ENCODE measurements at regions of chr1 and their contacts with region 1.

Region 1: GRCh38 chr1:245493029-245493428 is 338.2 kb downstream of the KIF26B start:
- DNase-seq: no peak
- ATAC-seq: no peak
- H3K4me3 ChIP-seq: no peak overlapping the region
- H3K27ac ChIP-seq: no peak overlapping the region
- H3K4me1 ChIP-seq: no peaks in the 10 kb centered on the region
- H3K27me3 ChIP-seq: no peaks in the 10 kb centered on the region
- CTCF ChIP-seq: no peak

Region 2: GRCh38 chr1:244796718-244797406 is 696.2 kb before region 1 on chr1:
- CTCF ChIA-PET with region 1: no interaction called
- POLR2A ChIA-PET with region 1: no interaction called
- in situ Hi-C with region 1: no loop called
- intact Hi-C with region 1: loop called (anchors 5 kb)
- DNase-seq: peak; percentile 43
- ATAC-seq: peak; percentile 85
- H3K4me3 ChIP-seq: no peak overlapping the region
- H3K27ac ChIP-seq: no peak overlapping the region
- H3K4me1 ChIP-seq: no peaks in the 10 kb centered on the region
- H3K27me3 ChIP-seq: no peaks in the 10 kb centered on the region
- CTCF ChIP-seq: peak; percentile 84